ENCODE measurements at regions of chr11 and their contacts with region 1.

Region 1: DNA sequence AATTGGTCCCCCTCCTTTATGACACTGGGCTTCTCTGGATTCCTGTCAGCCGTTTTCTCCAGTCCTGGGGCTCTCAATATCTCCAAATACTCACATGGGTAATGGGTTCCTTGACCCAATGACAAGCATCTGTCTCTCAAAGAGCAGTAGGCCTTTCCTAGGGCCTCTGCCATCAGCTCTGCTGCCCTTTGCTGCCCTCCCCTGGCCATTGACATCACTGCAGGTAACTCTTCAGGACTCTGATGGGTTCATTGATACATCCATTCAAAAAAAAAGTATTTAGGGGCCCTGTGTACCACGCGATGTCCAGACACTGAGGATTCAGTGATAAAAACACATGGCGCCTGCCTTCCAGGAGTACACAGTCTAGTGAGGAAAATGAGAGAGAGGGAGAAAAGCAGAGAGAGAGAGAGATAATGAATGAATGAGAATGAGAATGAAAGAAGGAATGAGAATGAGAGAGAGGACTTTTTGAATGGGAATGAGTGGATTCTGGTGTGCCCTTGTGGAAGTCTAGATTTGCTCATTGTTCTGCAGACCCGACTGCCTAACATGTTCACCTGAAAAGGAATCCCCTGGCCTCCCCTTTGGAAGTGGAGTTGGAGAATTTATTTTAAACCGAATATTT is 42.6 kb upstream of the OLFML1 start:
- DNase-seq: peak; percentile 64 to 83
- H3K4me3 ChIP-seq: no peak overlapping the region
- H3K4me3 Mint-ChIP-seq: no peak overlapping the region
- H3K27ac Mint-ChIP-seq: no peak overlapping the region
- H3K4me1 ChIP-seq: no peaks in the 10 kb centered on the region
- H3K4me1 Mint-ChIP-seq: no peaks in the 10 kb centered on the region
- H3K27me3 ChIP-seq: no peaks in the 10 kb centered on the region
- H3K27me3 Mint-ChIP-seq: peaks cover 21% of the 10 kb centered on the region
- CTCF ChIP-seq: peak; percentile 82 to 96

Region 2: DNA sequence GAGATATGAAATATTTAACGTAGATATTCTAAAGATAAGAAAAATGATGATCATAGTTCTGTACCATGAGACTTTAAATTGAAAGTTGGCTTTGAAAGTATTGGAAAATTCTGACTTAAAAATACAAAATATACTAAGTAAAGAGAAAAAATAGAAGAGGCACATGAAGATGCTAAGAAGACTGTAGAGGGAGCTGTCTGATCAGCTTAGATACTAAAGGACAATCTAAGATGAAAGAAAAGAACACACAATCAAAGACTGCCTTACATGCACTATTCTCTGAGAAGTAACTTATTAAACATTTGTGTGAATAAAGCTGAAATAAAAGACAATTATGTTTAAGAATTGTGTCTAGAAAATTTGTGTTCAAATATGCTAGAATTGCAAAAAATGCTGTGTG is 298.8 kb before region 1 on chr11:
- CTCF ChIA-PET with region 1: no interaction called
- POLR2A ChIA-PET with region 1: no interaction called
- intact Hi-C with region 1: loop called (anchors 2 kb)
- DNase-seq: no peak
- H3K4me3 ChIP-seq: no peak overlapping the region
- H3K4me3 Mint-ChIP-seq: no peak overlapping the region
- H3K27ac Mint-ChIP-seq: no peak overlapping the region
- H3K4me1 ChIP-seq: no peaks in the 10 kb centered on the region
- H3K4me1 Mint-ChIP-seq: no peaks in the 10 kb centered on the region
- H3K27me3 ChIP-seq: no peaks in the 10 kb centered on the region
- H3K27me3 Mint-ChIP-seq: peaks cover 6% of the 10 kb centered on the region
- CTCF ChIP-seq: peak; percentile 12 to 23

Region 3: GRCh38 chr11:7353100-7353499 is 89.6 kb before region 1 on chr11:
- CTCF ChIA-PET with region 1: interaction called, 25 read pairs
- POLR2A ChIA-PET with region 1: no interaction called
- intact Hi-C with region 1: loop called (anchors 1 kb)
- DNase-seq: peak; percentile 39 to 63
- H3K4me3 ChIP-seq: no peak overlapping the region
- H3K4me3 Mint-ChIP-seq: no peak overlapping the region
- H3K27ac Mint-ChIP-seq: no peak overlapping the region
- H3K4me1 ChIP-seq: no peaks in the 10 kb centered on the region
- H3K4me1 Mint-ChIP-seq: no peaks in the 10 kb centered on the region
- H3K27me3 ChIP-seq: no peaks in the 10 kb centered on the region; the same call in 1 of the 2 replicates
- H3K27me3 Mint-ChIP-seq: peaks cover 15% of the 10 kb centered on the region
- CTCF ChIP-seq: peak; percentile 63 to 76

Region 4: DNA sequence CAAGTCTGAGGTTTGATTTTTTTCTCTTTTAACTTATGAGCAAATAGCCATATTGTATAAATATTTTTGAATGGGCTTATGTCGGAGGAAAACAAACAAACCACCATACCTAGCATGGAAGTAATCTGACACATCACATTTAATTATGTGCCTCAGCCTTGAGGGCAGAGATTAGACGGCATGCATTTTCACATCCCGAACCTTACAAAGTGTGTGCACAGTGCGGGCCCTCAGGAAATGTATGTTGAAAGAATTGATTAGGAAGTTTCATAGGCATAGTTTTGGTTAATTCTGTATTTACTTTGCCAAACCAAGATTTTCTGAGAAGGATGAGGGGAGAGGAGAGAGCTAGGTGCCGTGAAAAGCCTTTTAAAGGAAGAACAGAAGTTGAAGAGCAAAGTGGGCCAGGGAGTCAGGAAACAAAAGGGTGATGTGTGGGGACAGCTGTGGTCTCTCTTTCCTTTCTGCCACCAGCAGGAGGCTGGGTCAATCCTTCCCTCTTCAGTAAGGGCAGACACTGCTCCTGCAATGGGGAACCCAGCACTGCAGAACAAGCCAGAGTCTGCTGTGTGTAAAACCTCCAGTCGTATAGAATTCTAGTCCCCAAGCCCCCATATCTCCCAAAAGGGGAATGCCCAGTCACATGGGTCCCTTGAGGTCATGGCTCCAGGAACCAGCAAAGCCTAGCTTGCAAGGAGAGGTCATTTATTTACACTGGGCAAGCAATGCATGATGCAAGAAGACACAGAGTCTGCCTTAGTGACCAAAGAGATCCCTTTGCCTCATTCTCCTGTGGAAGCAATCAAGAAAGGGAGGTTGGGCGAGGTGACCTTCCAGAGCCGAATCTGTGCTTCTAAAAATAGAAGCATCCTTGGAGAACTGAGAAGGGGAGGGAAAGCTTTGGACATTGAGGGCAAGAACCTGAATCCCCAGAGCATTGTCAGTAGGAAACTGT is 28.5 kb before region 1 on chr11:
- CTCF ChIA-PET with region 1: interaction called, 6 read pairs
- POLR2A ChIA-PET with region 1: no interaction called
- intact Hi-C with region 1: loop called (anchors 2 kb)
- DNase-seq: peak in 1 of 2 experiments; percentile 4
- H3K4me3 ChIP-seq: no peak overlapping the region
- H3K4me3 Mint-ChIP-seq: no peak overlapping the region
- H3K27ac Mint-ChIP-seq: peak overlapping the region; percentile 75
- H3K4me1 ChIP-seq: no peaks in the 10 kb centered on the region
- H3K4me1 Mint-ChIP-seq: peaks cover 5% of the 10 kb centered on the region
- H3K27me3 ChIP-seq: no peaks in the 10 kb centered on the region
- H3K27me3 Mint-ChIP-seq: peaks cover 16% of the 10 kb centered on the region
- CTCF ChIP-seq: no peak

Region 5: DNA sequence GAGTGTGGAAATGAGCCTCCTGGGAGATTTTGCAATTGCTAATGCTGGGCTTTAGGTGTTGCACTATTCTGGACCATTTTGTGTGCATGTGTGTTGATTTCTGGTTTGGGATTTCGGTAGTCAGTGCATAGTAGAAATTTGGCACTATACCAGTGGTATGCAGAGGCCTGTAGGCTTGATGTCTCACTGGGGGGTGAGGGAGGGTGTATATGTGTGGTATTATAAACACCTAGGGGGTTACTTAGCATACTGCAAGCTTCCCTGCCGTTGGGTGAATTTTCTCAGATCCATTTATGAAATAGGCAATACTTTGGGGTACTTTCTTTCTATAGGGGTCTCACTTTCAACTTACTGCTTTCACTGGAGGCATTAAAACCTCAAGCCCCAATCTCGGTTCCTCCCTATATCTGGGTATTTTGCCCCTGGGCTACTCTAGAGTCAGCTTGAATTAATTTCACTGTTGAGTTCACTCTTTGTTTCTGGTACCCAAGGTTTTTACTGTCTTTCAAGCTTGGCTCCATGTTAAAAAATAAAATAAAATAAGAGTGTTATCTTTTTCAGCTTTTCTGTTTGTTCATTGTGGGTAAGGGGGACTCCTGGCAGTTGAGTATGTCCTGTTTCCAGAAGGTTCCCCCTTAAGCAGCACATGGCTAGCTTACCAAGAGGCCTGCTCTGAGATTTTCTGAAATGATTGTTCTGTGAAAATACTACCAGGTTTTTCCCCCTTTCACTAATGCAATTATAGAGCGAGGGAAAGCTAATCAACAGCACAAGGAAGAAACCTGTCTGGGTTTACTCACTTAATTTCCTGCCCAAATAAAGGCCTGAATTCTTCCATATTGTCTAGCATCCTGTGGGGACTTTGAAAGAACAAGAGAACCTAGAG is 116.9 kb after region 1 on chr11:
- CTCF ChIA-PET with region 1: no interaction called
- POLR2A ChIA-PET with region 1: no interaction called
- intact Hi-C with region 1: no loop called
- DNase-seq: no peak
- H3K4me3 ChIP-seq: no peak overlapping the region
- H3K4me3 Mint-ChIP-seq: no peak overlapping the region
- H3K27ac Mint-ChIP-seq: no peak overlapping the region
- H3K4me1 ChIP-seq: no peaks in the 10 kb centered on the region; the same call in 1 of the 2 replicates
- H3K4me1 Mint-ChIP-seq: peaks cover 8% of the 10 kb centered on the region
- H3K27me3 ChIP-seq: no peaks in the 10 kb centered on the region
- H3K27me3 Mint-ChIP-seq: no peaks in the 10 kb centered on the region
- CTCF ChIP-seq: no peak

Region 6: DNA sequence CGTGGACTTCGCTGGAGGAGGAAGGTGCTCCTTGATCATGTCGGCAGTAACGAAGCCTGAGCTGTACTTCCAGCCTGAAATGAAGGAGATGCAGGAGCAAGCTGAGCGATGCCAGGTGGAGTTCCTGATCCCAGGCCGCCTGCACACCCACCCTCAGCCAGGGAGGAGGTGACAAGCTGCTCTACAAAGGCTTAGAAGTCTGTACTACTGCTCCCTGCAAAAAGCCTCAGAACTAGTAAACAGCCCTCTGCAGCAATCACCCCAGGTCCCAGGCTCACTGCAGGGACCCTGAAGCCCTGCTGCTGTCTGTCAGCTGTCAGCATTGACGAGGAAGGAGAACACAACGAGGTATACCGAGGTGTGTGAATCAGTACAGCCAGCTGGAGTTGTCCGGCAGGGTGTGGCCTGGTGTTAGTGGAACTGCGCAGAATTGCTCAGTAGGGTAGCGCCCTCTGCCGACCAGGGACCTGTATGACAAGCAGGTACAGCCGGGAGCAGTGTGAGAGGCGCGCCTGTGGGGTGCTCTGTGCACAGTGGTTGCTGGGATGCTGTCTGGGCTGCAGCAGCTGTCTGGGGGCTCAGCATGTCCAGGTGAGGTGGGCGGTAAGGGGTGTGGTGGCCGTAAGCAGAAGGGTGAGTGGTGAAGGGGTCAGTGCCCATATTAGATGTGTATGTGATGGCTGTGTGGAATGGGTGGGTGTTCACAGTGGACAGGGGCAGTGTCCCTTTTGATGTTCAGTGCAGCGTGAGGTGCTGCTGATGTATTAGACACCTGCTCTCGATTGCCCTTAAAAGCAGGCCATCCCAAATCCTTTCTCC is 223.0 kb after region 1 on chr11:
- CTCF ChIA-PET with region 1: no interaction called
- POLR2A ChIA-PET with region 1: no interaction called
- intact Hi-C with region 1: loop called (anchors 5 kb)
- DNase-seq: peak; percentile 87 to 90
- H3K4me3 ChIP-seq: no peak overlapping the region
- H3K4me3 Mint-ChIP-seq: no peak overlapping the region
- H3K27ac Mint-ChIP-seq: peak overlapping the region; percentile 11
- H3K4me1 ChIP-seq: no peaks in the 10 kb centered on the region
- H3K4me1 Mint-ChIP-seq: peaks cover 12% of the 10 kb centered on the region
- H3K27me3 ChIP-seq: no peaks in the 10 kb centered on the region
- H3K27me3 Mint-ChIP-seq: no peaks in the 10 kb centered on the region
- CTCF ChIP-seq: peak; percentile 92 to 94

Measured in Caco-2 (cell line).